ENCODE measurements at regions of chr11 and their contacts with region 1.

Region 1: DNA sequence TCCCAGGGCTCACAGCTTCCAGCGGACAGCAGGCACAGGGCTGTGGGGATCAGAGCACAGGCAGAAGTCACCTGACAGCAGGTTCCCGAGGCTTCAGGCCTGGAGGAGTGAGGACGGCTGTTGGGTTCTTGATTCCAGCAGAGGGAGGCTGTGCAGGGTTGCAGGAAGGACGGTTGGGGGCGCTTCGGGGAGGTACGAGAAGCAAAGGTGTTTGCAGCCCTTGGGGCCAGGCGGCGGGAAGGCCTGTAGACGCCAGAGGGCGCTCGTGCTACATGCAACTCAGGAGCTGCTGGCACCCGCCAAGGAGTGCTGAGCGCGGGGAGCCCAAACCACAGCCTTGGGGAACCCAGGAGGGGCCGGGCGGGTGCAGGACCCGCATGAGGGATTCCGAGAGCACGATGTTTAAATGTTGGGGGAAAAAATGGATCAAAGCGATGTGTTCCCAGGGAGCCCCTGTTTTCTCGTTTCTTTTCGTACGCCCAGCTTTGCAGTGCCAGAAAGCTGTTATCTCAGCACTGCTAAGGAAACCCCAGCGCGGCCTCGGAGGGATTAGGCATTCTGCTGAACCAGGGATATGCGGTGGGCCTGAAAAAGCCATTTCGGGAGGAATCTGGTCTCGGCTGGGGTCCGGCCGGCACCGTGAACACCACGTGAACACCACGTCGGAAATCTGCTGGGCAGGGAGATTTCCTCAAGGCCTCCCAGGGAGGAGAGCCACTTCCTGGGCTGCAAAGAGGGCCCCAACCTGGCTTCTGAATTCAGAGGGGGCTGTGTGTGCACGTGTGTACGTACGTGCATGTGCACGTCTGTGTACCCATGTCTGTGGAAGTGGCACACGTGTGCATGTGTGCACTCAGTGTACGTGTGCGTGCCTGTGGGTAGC is 88.1 kb downstream of the KCNQ1 start:
- DNase-seq: peak; percentile 96
- ATAC-seq: peak; percentile 88
- H3K4me3 Mint-ChIP-seq: peak overlapping the region; percentile 70
- H3K27ac Mint-ChIP-seq: peak overlapping the region; percentile 67
- H3K4me1 Mint-ChIP-seq: peaks cover 32% of the 10 kb centered on the region
- H3K27me3 Mint-ChIP-seq: no peaks in the 10 kb centered on the region

Region 2: GRCh38 chr11:2305140-2305840 is 227.7 kb before region 1 on chr11:
- CTCF ChIA-PET with region 1: interaction called, 35 read pairs
- POLR2A ChIA-PET with region 1: interaction called, 3 read pairs
- DNase-seq: peak; percentile 89
- ATAC-seq: peak; percentile 62
- H3K4me3 Mint-ChIP-seq: peak overlapping the region; percentile 94
- H3K27ac Mint-ChIP-seq: peak overlapping the region; percentile 89
- H3K4me1 Mint-ChIP-seq: peaks cover 55% of the 10 kb centered on the region
- H3K27me3 Mint-ChIP-seq: no peaks in the 10 kb centered on the region

Region 3: GRCh38 chr11:2428322-2428795 is 104.6 kb before region 1 on chr11:
- CTCF ChIA-PET with region 1: interaction called, 76 read pairs
- POLR2A ChIA-PET with region 1: no interaction called
- DNase-seq: peak; percentile 78
- ATAC-seq: peak; percentile 86
- H3K4me3 Mint-ChIP-seq: no peak overlapping the region
- H3K27ac Mint-ChIP-seq: no peak overlapping the region
- H3K4me1 Mint-ChIP-seq: no peaks in the 10 kb centered on the region
- H3K27me3 Mint-ChIP-seq: no peaks in the 10 kb centered on the region

Region 4: GRCh38 chr11:2444821-2445745 is 87.9 kb before region 1 on chr11 and contains the start of gene KCNQ1:
- CTCF ChIA-PET with region 1: interaction called, 14 read pairs
- POLR2A ChIA-PET with region 1: no interaction called
- DNase-seq: peak; percentile 43
- ATAC-seq: peak; percentile 77
- H3K4me3 Mint-ChIP-seq: peak within 1 kb of the TSS; percentile 90
- H3K27ac Mint-ChIP-seq: peak within 1 kb of the TSS; percentile 80
- H3K4me1 Mint-ChIP-seq: peaks cover 47% of the 10 kb centered on the region
- H3K27me3 Mint-ChIP-seq: peaks cover 14% of the 10 kb centered on the region
- total RNA-seq, gene KCNQ1: 20.4 to 26.0 TPM

Region 5: DNA sequence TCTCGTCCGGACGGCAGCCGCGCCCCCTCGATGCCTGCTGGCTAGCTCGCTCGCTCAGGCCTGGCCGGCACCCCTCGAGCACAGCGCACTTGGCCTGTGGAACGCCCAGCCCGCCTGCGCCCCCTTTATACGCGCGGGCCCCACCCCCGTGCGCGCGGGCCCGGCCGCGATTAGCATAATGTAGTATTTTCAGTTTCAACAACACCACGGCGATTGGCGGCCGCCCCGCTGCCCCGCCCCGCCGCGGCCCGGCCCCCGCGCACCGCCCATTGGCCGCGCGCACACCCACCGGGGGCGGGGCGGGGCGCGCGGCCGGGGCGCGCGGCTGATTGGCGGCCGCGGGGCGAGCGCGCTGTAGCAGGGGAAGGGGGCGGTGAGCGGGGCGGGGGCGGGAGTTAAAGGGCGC is 352.7 kb after region 1 on chr11 and contains the start of gene CDKN1C:
- CTCF ChIA-PET with region 1: interaction called, 485 read pairs
- POLR2A ChIA-PET with region 1: interaction called, 22 read pairs
- DNase-seq: peak; percentile 86
- ATAC-seq: peak; percentile 89
- H3K4me3 Mint-ChIP-seq: peak within 1 kb of the TSS; percentile 74
- H3K27ac Mint-ChIP-seq: no peak within 1 kb of the TSS
- H3K4me1 Mint-ChIP-seq: peaks cover 19% of the 10 kb centered on the region
- H3K27me3 Mint-ChIP-seq: peaks cover 22% of the 10 kb centered on the region
- total RNA-seq, gene CDKN1C: 0.21 to 0.32 TPM

Region 6: GRCh38 chr11:2930704-2931428 is 397.9 kb after region 1 on chr11:
- CTCF ChIA-PET with region 1: interaction called, 17 read pairs
- POLR2A ChIA-PET with region 1: no interaction called
- DNase-seq: peak; percentile 72
- ATAC-seq: peak; percentile 23
- H3K4me3 Mint-ChIP-seq: peak overlapping the region; percentile 73
- H3K27ac Mint-ChIP-seq: peak overlapping the region; percentile 66
- H3K4me1 Mint-ChIP-seq: peaks cover 44% of the 10 kb centered on the region
- H3K27me3 Mint-ChIP-seq: peaks cover 26% of the 10 kb centered on the region

Region 7: DNA sequence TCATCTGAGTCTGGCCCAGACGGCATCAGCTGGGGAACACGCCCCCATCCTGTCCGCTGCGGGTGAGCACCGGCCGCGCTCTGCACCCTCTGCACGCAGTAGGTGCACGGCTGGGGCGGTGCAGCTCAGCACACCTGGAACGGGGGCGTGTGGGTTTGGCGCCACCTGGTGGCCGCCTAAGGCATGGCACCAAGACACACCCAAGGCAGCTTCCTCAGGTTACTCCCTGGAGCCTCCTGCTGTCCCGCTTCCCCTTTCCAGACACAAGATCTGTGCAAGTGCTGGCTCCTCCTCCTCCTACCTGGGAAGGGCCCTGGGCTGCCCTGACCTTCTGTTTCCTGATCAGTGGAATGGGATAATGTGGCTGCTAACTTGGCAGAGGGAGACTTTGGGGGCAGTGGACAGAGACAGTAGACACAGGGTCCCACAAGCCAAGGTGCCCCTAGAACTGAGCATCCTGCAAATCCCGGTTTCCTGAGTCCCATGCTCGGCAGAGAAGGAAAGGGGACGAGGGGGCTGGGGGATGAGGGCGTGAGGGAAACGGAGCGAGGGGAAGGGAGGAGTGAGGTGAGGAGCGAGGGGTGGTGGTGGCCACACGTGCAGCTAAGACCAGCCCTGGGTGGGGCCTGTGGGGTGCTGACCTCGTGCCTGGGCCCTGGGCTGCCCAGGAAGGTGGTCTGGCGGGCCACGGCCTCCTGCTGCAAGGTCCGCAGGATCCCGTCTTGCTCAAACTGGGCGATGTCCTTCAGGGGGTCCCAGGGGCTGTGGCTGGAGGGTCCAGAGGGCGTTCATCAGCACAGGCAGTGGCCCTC is 559.1 kb after region 1 on chr11:
- CTCF ChIA-PET with region 1: interaction called, 29 read pairs
- POLR2A ChIA-PET with region 1: no interaction called
- DNase-seq: peak; percentile 80
- ATAC-seq: peak; percentile 91
- H3K4me3 Mint-ChIP-seq: no peak overlapping the region
- H3K27ac Mint-ChIP-seq: peak overlapping the region; percentile 57
- H3K4me1 Mint-ChIP-seq: peaks cover 12% of the 10 kb centered on the region
- H3K27me3 Mint-ChIP-seq: no peaks in the 10 kb centered on the region